Calu3 (cell line): ENCODE measurements at regions of chr4 and their contacts with region 1.

Region 1: DNA sequence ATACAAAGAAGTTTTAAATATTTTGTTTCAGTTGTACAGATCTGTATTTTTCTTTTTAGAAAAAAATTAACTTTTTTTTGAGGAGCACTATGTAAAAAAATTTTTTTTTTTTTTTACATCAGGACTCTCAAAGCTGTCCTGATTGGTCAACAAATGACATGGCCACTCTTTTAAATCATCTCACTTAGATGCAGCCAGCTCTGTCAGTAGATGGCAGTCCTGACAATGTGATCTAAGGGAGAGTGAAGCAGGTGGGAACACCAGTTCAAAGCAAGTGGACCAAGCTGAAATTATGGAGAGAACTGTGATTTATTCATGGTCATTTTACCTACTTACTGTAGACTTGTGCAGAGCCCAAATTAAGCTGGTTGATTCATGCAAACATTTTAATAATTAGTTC is 174.6 kb upstream of the GPRIN3 start:
- DNase-seq: peak; percentile 30
- H3K4me3 Mint-ChIP-seq: no peak overlapping the region
- H3K27ac Mint-ChIP-seq: no peak overlapping the region
- H3K4me1 Mint-ChIP-seq: no peaks in the 10 kb centered on the region
- H3K27me3 Mint-ChIP-seq: no peaks in the 10 kb centered on the region
- CTCF ChIP-seq: no peak

Region 2: GRCh38 chr4:89558147-89558546 is 75.9 kb after region 1 on chr4:
- CTCF ChIA-PET with region 1: no interaction called
- intact Hi-C with region 1: loop called (anchors 10 kb)
- DNase-seq: no peak
- H3K4me3 Mint-ChIP-seq: no peak overlapping the region
- H3K27ac Mint-ChIP-seq: no peak overlapping the region
- H3K4me1 Mint-ChIP-seq: peaks cover 3% of the 10 kb centered on the region
- H3K27me3 Mint-ChIP-seq: no peaks in the 10 kb centered on the region
- CTCF ChIP-seq: peak; percentile 14

Region 3: GRCh38 chr4:89586864-89587263 is 104.6 kb after region 1 on chr4:
- CTCF ChIA-PET with region 1: interaction called, 3 read pairs
- intact Hi-C with region 1: loop called (anchors 10 kb)
- DNase-seq: no peak
- H3K4me3 Mint-ChIP-seq: no peak overlapping the region
- H3K27ac Mint-ChIP-seq: no peak overlapping the region
- H3K4me1 Mint-ChIP-seq: no peaks in the 10 kb centered on the region
- H3K27me3 Mint-ChIP-seq: no peaks in the 10 kb centered on the region
- CTCF ChIP-seq: no peak

Region 4: DNA sequence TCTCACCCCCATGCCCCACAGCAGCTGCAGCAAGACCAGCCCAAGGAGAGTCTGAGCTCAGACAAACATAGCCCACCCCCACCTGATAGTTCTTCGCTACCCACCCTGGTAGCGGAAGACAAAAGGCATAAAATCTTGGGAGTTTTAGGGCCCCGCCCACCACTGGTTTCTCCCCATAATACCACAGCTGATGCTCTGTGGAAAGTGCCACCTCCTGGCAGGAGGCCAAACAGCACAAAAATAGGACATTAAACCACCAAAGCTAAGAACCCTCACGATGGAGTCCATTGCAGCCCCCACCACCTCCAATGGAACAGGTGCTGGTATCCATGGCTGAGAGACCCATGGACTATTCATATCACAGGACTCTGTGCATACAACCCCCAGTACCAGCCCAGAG is 128.0 kb after region 1 on chr4:
- CTCF ChIA-PET with region 1: no interaction called
- intact Hi-C with region 1: no loop called
- DNase-seq: no peak
- H3K4me3 Mint-ChIP-seq: no peak overlapping the region
- H3K27ac Mint-ChIP-seq: no peak overlapping the region
- H3K4me1 Mint-ChIP-seq: no peaks in the 10 kb centered on the region
- H3K27me3 Mint-ChIP-seq: no peaks in the 10 kb centered on the region
- CTCF ChIP-seq: no peak

Region 5: DNA sequence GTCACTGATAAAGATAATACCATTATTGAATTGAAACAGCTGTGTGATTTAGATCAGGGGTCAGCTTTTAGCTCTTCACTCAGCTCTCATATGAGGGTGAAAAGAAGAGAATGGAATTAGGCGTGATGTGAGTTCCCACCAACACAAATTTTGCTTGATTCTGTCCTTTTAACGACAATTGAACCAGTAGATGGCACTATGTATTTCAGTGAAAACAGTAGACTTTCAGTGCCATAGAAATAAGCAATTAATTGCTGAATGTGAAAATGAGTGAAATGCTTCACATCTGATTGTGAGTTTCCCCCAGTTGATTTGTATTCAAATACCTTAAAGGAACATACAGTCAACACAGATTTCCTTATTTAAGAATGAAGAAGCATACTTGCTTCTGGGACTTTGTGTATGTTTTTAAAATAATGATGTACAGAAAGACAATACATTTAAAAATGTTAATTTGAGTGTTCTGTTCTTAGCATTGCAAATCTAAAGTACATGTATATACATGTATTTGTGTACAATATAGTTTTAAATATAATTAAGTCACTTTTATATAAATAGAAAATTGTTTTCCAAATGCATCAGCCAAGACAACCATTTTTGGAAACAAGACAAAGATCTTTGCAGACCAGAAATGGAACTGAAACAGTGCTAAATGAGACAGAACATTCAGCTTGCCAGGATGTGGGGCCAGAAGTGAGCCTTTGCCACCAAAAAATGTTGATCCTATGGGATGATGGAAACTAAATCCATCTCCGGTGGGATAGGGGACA is 175.9 kb after region 1 on chr4:
- CTCF ChIA-PET with region 1: no interaction called
- intact Hi-C with region 1: loop called (anchors 5 kb)
- DNase-seq: no peak
- H3K4me3 Mint-ChIP-seq: no peak overlapping the region
- H3K27ac Mint-ChIP-seq: no peak overlapping the region
- H3K4me1 Mint-ChIP-seq: peaks cover 8% of the 10 kb centered on the region
- H3K27me3 Mint-ChIP-seq: no peaks in the 10 kb centered on the region
- CTCF ChIP-seq: no peak

Region 6: DNA sequence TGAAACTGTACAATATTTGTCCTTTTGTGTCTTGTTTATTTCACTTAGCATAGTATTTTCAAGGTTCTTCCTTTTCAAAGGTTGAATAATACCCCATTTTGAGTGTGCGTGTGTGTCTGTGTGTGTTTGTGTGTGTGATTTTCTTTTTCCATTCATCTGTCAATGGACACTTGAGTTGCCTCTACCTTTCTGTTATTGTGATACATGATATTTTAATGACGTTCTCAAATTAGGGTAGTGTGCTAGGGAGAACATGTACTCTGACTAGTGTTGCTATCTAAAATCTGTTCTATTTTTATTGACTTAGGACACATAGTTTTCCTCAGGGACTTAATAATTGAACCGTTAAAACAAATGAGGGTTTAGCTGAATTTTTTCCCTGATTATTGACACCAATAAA is 422.3 kb after region 1 on chr4:
- CTCF ChIA-PET with region 1: no interaction called
- intact Hi-C with region 1: loop called (anchors 2 kb)
- DNase-seq: no peak
- H3K4me3 Mint-ChIP-seq: no peak overlapping the region
- H3K27ac Mint-ChIP-seq: no peak overlapping the region
- H3K4me1 Mint-ChIP-seq: no peaks in the 10 kb centered on the region
- H3K27me3 Mint-ChIP-seq: no peaks in the 10 kb centered on the region
- CTCF ChIP-seq: no peak